ENCODE measurements at regions of chr15 and their contacts with region 1.

Region 1: GRCh38 chr15:57306161-57306943 is 70.0 kb upstream of the CGNL1 start:
- DNase-seq: peak; percentile 53 to 81 (median 70)
- H3K4me3 ChIP-seq: peak overlapping the region; percentile 50
- H3K4me3 Mint-ChIP-seq: peak overlapping the region in 6 of 7 donors; percentile 23 to 75 (median 59)
- H3K27ac ChIP-seq: no peak overlapping the region
- H3K27ac Mint-ChIP-seq: no peak overlapping the region
- H3K4me1 ChIP-seq: no peaks in the 10 kb centered on the region
- H3K4me1 Mint-ChIP-seq: peaks cover 4 to 17% (median 5%) of the 10 kb centered on the region in 3 donors
- H3K27me3 ChIP-seq: no peaks in the 10 kb centered on the region
- H3K27me3 Mint-ChIP-seq: peaks cover 9 to 22% of the 10 kb centered on the region in 2 donors

Region 2: DNA sequence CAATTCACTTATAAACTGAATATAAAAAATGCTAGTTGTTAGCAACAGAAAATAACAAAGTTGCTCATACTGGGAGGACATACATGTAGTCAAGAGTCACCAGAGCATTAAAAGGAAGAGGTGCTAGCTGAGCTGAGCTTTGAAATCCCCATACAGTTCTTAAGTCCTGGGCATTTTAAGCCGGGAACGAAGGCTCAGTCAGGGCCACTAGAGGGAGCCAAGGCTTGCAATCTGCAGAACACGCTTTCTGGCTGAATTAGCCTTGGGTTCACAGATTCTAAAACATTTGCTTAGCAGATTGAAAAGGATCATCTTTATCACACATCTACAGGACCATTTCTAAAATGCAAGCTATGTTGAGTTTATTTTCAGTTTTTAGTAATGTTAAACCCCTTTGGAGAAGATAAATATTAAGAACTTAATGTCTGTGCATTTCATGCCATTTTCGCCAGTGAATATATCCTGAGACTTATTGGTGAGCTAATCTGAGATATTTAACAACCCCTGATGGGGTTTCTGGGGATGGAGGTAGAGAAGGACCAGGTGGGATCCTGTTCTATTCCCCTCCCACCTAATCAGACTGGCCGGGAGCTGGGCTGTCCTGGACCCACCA is 815.1 kb before region 1 on chr15:
- CTCF ChIA-PET with region 1: interaction called, 17 read pairs
- POLR2A ChIA-PET with region 1: no interaction called
- DNase-seq: peak; percentile 12 to 62 (median 13)
- H3K4me3 ChIP-seq: no peak overlapping the region
- H3K4me3 Mint-ChIP-seq: no peak overlapping the region
- H3K27ac ChIP-seq: no peak overlapping the region
- H3K27ac Mint-ChIP-seq: no peak overlapping the region
- H3K4me1 ChIP-seq: no peaks in the 10 kb centered on the region
- H3K4me1 Mint-ChIP-seq: no peaks in the 10 kb centered on the region
- H3K27me3 ChIP-seq: no peaks in the 10 kb centered on the region
- H3K27me3 Mint-ChIP-seq: peaks cover 8 to 26% of the 10 kb centered on the region in 2 donors

Region 3: GRCh38 chr15:56821721-56822425 is 484.5 kb before region 1 on chr15:
- CTCF ChIA-PET with region 1: interaction called, 21 read pairs
- POLR2A ChIA-PET with region 1: no interaction called
- DNase-seq: peak in 4 of 5 donors; percentile 19 to 53 (median 29)
- H3K4me3 ChIP-seq: no peak overlapping the region
- H3K4me3 Mint-ChIP-seq: no peak overlapping the region
- H3K27ac ChIP-seq: no peak overlapping the region
- H3K27ac Mint-ChIP-seq: no peak overlapping the region
- H3K4me1 ChIP-seq: no peaks in the 10 kb centered on the region
- H3K4me1 Mint-ChIP-seq: no peaks in the 10 kb centered on the region
- H3K27me3 ChIP-seq: no peaks in the 10 kb centered on the region
- H3K27me3 Mint-ChIP-seq: peaks cover 0 to 6% of the 10 kb centered on the region in 2 donors

Region 4: DNA sequence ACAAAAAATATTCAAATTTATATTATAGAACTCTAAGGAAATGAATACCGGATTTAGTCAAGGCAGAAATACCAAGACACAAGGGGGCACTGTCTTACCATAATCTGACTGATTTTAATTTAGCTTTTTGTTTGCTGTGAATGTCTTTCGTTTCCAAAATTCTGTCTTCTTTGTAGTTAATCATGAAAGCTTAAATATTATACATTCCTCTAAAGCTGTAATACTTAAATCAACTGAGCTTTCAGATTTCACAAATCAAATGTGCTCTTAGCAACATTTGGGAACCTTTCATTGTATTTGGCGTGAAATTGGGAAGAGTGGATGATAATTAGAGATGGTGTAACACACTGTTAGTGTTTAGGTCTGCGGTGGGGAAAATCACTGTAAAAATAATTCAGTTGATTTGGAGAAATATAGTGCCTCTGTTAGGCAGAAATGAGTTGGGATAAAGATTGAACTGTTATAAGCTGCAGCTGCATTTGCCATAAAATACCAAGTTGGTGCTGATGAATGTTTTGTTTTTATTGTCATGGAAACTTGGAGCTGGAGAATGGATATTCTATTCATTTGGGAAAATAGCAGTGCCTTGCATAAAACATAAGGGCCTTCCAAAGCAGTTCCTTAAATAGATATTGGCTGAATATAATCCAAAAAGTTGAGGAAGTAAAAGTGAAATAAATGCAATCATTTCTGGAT is 159.7 kb before region 1 on chr15:
- CTCF ChIA-PET with region 1: interaction called, 14 read pairs
- POLR2A ChIA-PET with region 1: no interaction called
- DNase-seq: peak in 1 of 5 donors; percentile 8
- H3K4me3 ChIP-seq: no peak overlapping the region
- H3K4me3 Mint-ChIP-seq: no peak overlapping the region
- H3K27ac ChIP-seq: no peak overlapping the region
- H3K27ac Mint-ChIP-seq: no peak overlapping the region
- H3K4me1 ChIP-seq: no peaks in the 10 kb centered on the region
- H3K4me1 Mint-ChIP-seq: peaks cover 7 to 8% (median 7%) of the 10 kb centered on the region in 3 donors
- H3K27me3 ChIP-seq: no peaks in the 10 kb centered on the region
- H3K27me3 Mint-ChIP-seq: no peaks in the 10 kb centered on the region

Measured in CD8-positive, alpha-beta memory T cell (primary cell).